ENCODE measurements at regions of chr12 and their contacts with region 1.

Region 1: DNA sequence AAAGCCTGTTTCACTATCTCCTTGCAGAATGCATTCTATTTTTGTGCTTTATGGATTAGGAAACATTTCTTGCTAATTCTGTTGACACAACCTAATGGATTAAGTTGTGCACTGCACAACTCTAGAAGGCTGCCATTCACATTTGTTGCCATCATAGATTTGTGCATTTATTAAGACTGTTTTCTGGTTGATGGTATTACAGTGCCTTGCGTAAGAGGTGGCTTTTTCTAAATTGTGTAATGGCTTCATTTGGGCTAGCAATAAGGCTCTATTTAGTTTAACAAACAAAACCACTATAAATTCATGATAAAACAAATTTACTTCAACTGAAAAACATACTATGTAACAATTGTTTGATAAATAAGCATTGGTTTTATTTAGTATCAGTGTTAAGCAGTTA is 175.9 kb downstream of the TRHDE start:
- DNase-seq: peak; percentile 50
- H3K4me3 ChIP-seq: no peak overlapping the region
- H3K27ac ChIP-seq: no peak overlapping the region
- H3K4me1 ChIP-seq: peaks cover 45% of the 10 kb centered on the region
- H3K27me3 ChIP-seq: no peaks in the 10 kb centered on the region
- CTCF ChIP-seq: no peak

Region 2: DNA sequence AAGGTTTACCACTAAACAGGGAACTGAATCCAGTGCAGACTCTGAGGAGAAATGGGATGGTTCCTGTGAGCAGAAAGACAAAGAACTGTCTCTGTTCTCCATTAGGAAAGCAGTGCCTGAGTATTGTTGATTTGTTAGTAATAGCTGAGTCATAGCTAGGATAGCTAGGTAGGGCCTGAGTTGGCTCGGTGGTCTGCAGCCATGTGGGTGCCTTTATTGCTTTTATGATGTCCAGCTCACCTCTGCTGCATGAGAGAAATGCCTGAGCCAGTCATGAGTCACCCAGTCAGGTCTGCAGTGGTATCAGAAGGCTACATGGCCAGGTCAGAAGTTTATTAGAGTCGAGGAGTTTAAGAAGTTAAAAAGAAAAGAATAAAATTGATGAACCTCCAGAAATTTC is 151.7 kb before region 1 on chr12:
- CTCF ChIA-PET with region 1: no interaction called
- POLR2A ChIA-PET with region 1: no interaction called
- intact Hi-C with region 1: no loop called
- DNase-seq: no peak
- H3K4me3 ChIP-seq: no peak overlapping the region
- H3K27ac ChIP-seq: no peak overlapping the region
- H3K4me1 ChIP-seq: no peaks in the 10 kb centered on the region
- H3K27me3 ChIP-seq: no peaks in the 10 kb centered on the region
- CTCF ChIP-seq: no peak

Region 3: DNA sequence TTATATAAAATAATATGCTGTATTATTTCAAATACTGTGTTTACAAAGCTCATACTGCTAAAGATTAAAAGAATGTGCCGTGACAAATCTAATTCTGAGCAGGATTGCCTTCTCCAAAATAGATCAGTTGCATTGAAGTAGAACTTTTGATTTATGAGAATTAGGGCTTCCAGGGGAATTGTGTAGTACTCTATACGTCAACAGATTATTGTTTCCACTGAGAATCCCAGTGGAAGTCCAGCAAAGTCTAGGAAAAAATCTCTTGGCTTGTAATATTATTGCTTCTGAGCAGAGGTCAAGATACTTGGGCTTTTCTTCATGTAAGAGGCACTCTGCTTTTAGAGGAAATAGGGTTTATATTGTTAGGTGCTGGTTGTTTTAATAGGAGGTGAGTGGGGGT is 42.0 kb before region 1 on chr12:
- CTCF ChIA-PET with region 1: no interaction called
- POLR2A ChIA-PET with region 1: no interaction called
- intact Hi-C with region 1: no loop called
- DNase-seq: peak; percentile 4
- H3K4me3 ChIP-seq: no peak overlapping the region
- H3K27ac ChIP-seq: peak overlapping the region; percentile 39
- H3K4me1 ChIP-seq: peaks cover 11% of the 10 kb centered on the region
- H3K27me3 ChIP-seq: no peaks in the 10 kb centered on the region
- CTCF ChIP-seq: no peak

Region 4: GRCh38 chr12:72491426-72491825 is 43.3 kb after region 1 on chr12:
- CTCF ChIA-PET with region 1: no interaction called
- POLR2A ChIA-PET with region 1: no interaction called
- intact Hi-C with region 1: no loop called
- DNase-seq: no peak
- H3K4me3 ChIP-seq: no peak overlapping the region
- H3K27ac ChIP-seq: no peak overlapping the region
- H3K4me1 ChIP-seq: peaks cover 4% of the 10 kb centered on the region
- H3K27me3 ChIP-seq: no peaks in the 10 kb centered on the region
- CTCF ChIP-seq: no peak

Region 5: GRCh38 chr12:72523754-72524153 is 75.7 kb after region 1 on chr12:
- CTCF ChIA-PET with region 1: no interaction called
- POLR2A ChIA-PET with region 1: no interaction called
- intact Hi-C with region 1: no loop called
- DNase-seq: no peak
- H3K4me3 ChIP-seq: no peak overlapping the region
- H3K27ac ChIP-seq: no peak overlapping the region
- H3K4me1 ChIP-seq: no peaks in the 10 kb centered on the region
- H3K27me3 ChIP-seq: no peaks in the 10 kb centered on the region
- CTCF ChIP-seq: no peak

Region 6: DNA sequence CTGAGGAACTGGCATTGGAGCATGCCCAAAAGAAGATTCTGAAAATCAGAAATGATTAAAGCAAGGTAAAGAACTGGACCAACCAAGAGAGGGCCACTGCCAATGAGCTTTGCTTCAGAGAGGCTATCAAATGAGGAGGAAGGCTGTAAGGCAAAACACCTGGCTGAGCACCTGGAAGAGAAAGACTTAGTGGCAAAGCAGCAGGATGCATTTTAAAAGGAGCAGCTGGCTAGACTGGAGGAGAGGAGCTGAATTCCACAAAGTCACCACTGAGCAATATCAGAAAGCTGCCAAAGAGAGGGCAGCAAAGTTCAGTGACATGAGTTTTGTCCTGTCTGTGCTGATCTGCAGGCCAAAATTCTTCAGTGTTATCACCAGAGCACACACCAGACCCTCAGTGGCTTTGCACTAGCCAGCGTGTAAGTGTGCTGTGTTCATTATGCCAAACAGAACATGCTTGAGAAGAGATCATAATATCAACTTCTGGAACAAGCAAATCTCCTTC is 162.8 kb after region 1 on chr12:
- CTCF ChIA-PET with region 1: no interaction called
- POLR2A ChIA-PET with region 1: no interaction called
- intact Hi-C with region 1: loop called (anchors 5 kb)
- DNase-seq: no peak
- H3K4me3 ChIP-seq: no peak overlapping the region
- H3K27ac ChIP-seq: no peak overlapping the region
- H3K4me1 ChIP-seq: peaks cover 42% of the 10 kb centered on the region
- H3K27me3 ChIP-seq: no peaks in the 10 kb centered on the region
- CTCF ChIP-seq: no peak